Mammary epithelial cell (primary cell): ENCODE measurements at regions of chr10 and their contacts with region 1.

Region 1: GRCh38 chr10:84957427-84957826 is 629.0 kb downstream of the CCSER2 start:
- DNase-seq: no peak
- H3K4me3 ChIP-seq: no peak overlapping the region
- H3K27ac ChIP-seq: no peak overlapping the region
- H3K4me1 ChIP-seq: no peaks in the 10 kb centered on the region
- H3K27me3 ChIP-seq: no peaks in the 10 kb centered on the region
- CTCF ChIP-seq: no peak

Region 2: DNA sequence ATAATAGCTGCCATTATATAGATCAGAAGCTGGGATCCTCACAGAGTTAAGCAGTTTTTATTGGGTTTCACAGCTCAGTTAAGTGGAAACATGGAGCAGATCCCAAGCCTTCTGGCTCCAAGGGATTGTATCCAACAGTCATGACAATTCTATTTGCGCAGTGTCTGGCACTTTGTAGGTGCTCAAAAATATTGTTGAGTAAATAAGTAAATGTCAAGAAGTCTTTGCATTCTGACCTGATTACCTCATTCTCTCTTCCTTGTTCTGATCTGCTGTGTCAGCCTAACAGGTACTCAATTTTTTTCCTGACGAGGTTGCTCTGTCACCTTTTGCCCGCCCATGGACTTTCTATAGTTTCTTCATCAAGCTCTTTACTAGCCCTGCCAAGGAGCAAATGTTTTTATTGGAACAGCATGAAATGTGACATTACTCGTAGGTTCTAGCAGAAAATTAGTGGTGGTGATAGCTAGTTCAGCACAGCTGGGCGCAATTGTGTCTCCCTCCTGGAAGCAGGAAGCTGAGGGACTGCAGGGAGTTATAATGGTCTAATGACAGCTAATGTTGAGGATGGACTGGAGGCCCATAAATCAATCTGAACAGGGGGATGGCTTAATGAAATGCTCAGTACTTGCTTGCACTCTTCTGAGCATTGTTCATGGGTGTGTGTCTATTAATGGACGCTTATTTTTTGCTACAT is 51.2 kb after region 1 on chr10:
- CTCF ChIA-PET with region 1: no interaction called
- dilution Hi-C with region 1: no loop called
- in situ Hi-C with region 1: no loop called
- intact Hi-C with region 1: loop called (anchors 5 kb)
- DNase-seq: no peak
- H3K4me3 ChIP-seq: no peak overlapping the region
- H3K27ac ChIP-seq: no peak overlapping the region
- H3K4me1 ChIP-seq: no peaks in the 10 kb centered on the region
- H3K27me3 ChIP-seq: no peaks in the 10 kb centered on the region
- CTCF ChIP-seq: no peak

Region 3: GRCh38 chr10:86178401-86179152 is 1221.2 kb after region 1 on chr10:
- CTCF ChIA-PET with region 1: no interaction called
- dilution Hi-C with region 1: loop called (anchors 10 kb)
- in situ Hi-C with region 1: no loop called
- intact Hi-C with region 1: no loop called
- DNase-seq: no peak
- H3K4me3 ChIP-seq: no peak overlapping the region
- H3K27ac ChIP-seq: no peak overlapping the region
- H3K4me1 ChIP-seq: no peaks in the 10 kb centered on the region
- H3K27me3 ChIP-seq: no peaks in the 10 kb centered on the region
- CTCF ChIP-seq: no peak